Activated CD4-positive, alpha-beta T cell treated with anti-CD3 and anti-CD28 coated beads, Interleukin-2, amount 10 ng/mL, durations not matched to agents 24 days and 14 days (primary cell): ENCODE measurements at regions of chr14 and their contacts with region 1.

Region 1: GRCh38 chr14:98182393-98183055 is 1089.5 kb downstream of the BCL11B start:
- DNase-seq: peak; percentile 73
- H3K4me3 Mint-ChIP-seq: peak overlapping the region; percentile 72
- H3K27ac Mint-ChIP-seq: peak overlapping the region; percentile 98
- H3K4me1 Mint-ChIP-seq: peaks cover 82% of the 10 kb centered on the region
- H3K27me3 Mint-ChIP-seq: no peaks in the 10 kb centered on the region

Region 2: GRCh38 chr14:97978341-97978740 is 204.2 kb before region 1 on chr14:
- intact Hi-C with region 1: loop called (anchors 5 kb)
- DNase-seq: peak; percentile 92
- H3K4me3 Mint-ChIP-seq: peak overlapping the region; percentile 89
- H3K27ac Mint-ChIP-seq: peak overlapping the region; percentile 97
- H3K4me1 Mint-ChIP-seq: peaks cover 49% of the 10 kb centered on the region
- H3K27me3 Mint-ChIP-seq: no peaks in the 10 kb centered on the region

Region 3: GRCh38 chr14:98167705-98168104 is 14.8 kb before region 1 on chr14:
- intact Hi-C with region 1: loop called (anchors 1 kb)
- DNase-seq: peak; percentile 79
- H3K4me3 Mint-ChIP-seq: peak overlapping the region; percentile 46
- H3K27ac Mint-ChIP-seq: peak overlapping the region; percentile 77
- H3K4me1 Mint-ChIP-seq: peaks cover 54% of the 10 kb centered on the region
- H3K27me3 Mint-ChIP-seq: no peaks in the 10 kb centered on the region

Region 4: DNA sequence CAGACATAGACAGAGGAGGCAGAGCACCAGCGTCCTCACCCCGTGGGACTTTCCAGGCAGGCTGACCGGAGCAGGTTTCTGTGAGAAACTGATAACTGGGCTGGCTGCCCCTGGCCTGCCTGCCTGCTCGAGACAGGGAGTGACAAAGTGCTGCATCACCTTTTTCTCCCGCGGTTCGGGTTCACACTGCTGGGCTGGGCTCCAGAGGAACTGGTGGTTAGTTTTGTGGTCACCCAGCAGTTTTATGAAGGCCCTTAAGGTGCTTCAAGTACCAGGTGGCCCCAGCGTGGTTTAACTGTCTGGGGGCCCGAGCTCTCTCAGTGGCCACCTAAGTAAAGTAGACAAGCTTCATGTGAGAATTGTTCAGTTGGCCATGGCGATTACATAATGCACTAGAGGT is 15.9 kb after region 1 on chr14:
- intact Hi-C with region 1: no loop called
- DNase-seq: peak; percentile 86
- H3K4me3 Mint-ChIP-seq: peak overlapping the region; percentile 5
- H3K27ac Mint-ChIP-seq: peak overlapping the region; percentile 30
- H3K4me1 Mint-ChIP-seq: peaks cover 78% of the 10 kb centered on the region
- H3K27me3 Mint-ChIP-seq: no peaks in the 10 kb centered on the region

Region 5: DNA sequence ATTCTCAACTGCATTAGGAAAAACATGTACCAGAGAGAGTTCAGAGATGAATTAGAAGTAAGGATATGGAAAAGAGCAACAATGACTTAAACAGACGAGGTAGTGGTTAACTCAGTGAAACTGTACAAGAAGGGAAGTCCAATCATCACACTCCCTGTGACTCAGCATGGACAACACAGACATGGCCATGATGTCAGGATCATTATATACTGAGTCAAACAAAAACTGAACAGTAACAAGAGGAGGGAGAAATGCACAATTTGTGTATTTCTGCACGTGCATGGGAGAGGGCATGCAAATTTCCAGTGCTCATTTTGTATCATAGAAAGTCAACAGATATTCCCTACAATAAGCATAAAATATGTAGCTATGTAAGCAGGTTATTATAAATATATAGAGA is 51.7 kb after region 1 on chr14:
- intact Hi-C with region 1: loop called (anchors 1 kb)
- DNase-seq: peak; percentile 67
- H3K4me3 Mint-ChIP-seq: no peak overlapping the region
- H3K27ac Mint-ChIP-seq: no peak overlapping the region
- H3K4me1 Mint-ChIP-seq: peaks cover 38% of the 10 kb centered on the region
- H3K27me3 Mint-ChIP-seq: no peaks in the 10 kb centered on the region

Region 6: GRCh38 chr14:99230208-99231151 is 1048.0 kb after region 1 on chr14:
- intact Hi-C with region 1: loop called (anchors 10 kb)
- DNase-seq: peak; percentile 95
- H3K4me3 Mint-ChIP-seq: peak overlapping the region; percentile 90
- H3K27ac Mint-ChIP-seq: peak overlapping the region; percentile 98
- H3K4me1 Mint-ChIP-seq: peaks cover 89% of the 10 kb centered on the region
- H3K27me3 Mint-ChIP-seq: no peaks in the 10 kb centered on the region